KBM-7 (cell line): ENCODE measurements at regions of chr13 and their contacts with region 1.

Region 1: DNA sequence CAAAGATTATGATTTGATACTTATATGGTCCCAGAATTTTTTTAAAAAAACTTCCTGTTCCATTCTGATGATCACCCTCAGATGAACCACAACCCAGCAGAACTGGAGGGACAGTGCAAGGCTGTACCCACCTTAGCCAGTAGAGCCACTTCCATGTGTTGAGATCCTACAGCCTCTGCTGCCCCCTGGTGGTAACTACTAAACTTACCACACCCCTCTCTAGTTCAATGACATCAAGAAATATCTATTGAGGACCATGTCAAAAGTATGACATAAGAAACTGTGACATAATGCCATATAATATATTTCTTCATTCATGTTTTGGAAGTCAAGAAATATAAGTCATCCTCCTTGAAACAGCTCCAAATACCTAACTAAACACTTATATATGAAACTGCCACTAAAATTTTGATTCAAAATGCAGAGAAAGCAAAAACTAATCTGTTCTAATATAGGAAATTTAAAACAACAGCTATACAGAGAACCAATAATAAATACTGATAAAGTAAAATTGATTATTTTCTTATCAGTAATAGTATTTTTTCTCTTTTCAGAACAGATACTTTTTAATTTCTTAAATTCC is 412.6 kb downstream of the KCTD12 start:
- DNase-seq: peak; percentile 81

Region 2: GRCh38 chr13:75687150-75687763 is 786.4 kb before region 1 on chr13:
- in situ Hi-C with region 1: loop called (anchors 25 kb)
- DNase-seq: peak; percentile 27